Breast epithelium (tissue), 4 donors: ENCODE measurements at regions of chr7 and their contacts with region 1.

Region 1: DNA sequence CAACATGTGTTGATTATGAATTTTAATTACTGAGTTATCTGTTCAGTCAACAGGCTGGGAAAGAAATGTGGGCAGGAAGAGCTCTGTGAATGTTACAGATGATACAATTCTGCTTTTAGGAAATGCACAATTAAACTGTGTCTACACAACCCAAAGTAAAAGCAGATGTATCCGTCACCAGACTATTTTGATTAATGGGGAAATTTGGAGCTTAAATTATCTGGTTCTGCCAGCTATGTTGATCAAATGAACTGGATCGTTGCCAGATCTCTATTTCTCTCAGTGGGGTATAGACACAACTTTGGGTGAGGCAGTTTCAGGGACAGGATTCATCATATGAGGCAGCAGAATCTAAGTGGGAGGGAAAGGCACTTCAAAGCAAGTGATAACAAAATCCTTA is 136.5 kb downstream of the NEUROD6 start:
- DNase-seq: no peak
- H3K4me3 ChIP-seq: no peak overlapping the region
- H3K27ac ChIP-seq: no peak overlapping the region
- H3K4me1 ChIP-seq: no peaks in the 10 kb centered on the region
- H3K27me3 ChIP-seq: no peaks in the 10 kb centered on the region
- CTCF ChIP-seq: no peak
- POLR2A ChIP-seq: no peak

Region 2: DNA sequence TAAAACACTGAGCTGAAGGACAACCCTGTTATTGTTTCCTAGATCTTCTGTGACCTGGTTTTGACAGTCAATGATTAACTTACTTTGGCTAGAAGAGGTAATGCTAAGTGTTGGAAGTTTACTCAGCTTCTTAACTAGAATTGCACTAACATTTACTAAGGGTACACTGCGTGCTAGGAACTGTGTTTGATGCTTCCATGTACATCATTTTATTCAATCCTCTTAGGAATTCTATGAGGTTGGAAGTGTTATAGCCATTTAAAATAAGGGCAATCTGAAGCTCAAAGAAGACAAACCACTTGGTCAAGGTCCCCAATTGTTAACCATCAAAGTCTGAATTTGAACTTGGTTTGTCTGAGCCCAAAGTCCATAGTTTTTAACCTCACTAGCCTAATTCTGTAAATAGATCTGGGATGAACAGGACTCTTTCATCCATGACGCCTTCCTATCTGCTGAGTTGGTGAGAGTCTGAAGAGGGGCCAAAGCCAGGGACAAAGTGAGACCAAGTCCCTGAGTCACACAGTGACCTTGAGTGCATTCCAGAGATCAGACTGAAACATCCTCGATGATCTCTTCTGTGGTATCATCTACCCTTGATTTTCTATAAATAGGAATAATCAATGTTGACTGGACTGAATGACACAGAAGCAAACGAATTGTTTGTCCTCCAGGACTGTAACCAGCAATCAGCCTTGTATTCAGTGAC is 948.9 kb before region 1 on chr7:
- intact Hi-C with region 1: no loop called
- DNase-seq: no peak
- H3K4me3 ChIP-seq: no peak overlapping the region
- H3K27ac ChIP-seq: no peak overlapping the region
- H3K4me1 ChIP-seq: peaks cover 0 to 11% of the 10 kb centered on the region in 2 donors
- H3K27me3 ChIP-seq: no peaks in the 10 kb centered on the region
- CTCF ChIP-seq: no peak
- POLR2A ChIP-seq: no peak

Region 3: DNA sequence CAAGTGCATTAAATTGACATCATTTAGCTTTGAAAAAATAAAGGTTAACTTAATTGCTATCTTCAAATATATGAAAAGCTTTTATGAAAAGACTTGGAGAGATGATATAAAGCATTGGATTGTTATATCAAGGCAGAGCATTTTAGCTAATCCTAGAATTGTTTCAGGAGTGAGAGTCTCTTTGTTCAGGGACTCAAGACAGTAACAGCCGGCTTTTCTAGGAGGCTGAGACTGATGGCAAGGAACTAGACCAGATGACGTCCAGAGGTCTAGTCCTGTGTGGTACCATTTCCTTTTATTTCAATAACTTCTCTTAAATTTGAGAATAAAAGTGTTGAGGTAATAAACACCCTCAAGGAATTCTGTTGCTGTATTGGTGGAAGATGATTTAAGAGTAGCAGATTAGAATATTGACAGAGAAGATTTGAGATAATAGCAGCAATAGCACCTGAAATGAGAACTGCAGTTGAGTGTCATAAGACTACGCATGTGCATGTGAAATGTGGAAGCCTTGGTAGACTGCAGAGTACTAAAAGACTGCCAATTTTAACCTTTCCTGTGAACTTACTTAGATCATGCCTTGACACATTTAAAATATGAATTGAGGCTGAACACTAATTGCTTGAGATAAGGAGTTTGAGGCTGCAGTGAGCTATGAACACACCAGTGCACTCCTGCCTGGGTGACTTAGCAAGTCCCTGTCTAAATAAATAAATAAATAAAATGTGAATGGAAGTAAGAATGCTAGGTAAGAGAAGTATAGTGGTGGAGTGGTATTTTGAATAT is 840.1 kb before region 1 on chr7:
- intact Hi-C with region 1: no loop called
- DNase-seq: no peak
- H3K4me3 ChIP-seq: no peak overlapping the region
- H3K27ac ChIP-seq: no peak overlapping the region
- H3K4me1 ChIP-seq: no peaks in the 10 kb centered on the region
- H3K27me3 ChIP-seq: no peaks in the 10 kb centered on the region
- CTCF ChIP-seq: no peak
- POLR2A ChIP-seq: no peak

Region 4: GRCh38 chr7:31228957-31229356 is 24.9 kb after region 1 on chr7:
- intact Hi-C with region 1: loop called (anchors 2 kb)
- DNase-seq: no peak
- H3K4me3 ChIP-seq: no peak overlapping the region
- H3K27ac ChIP-seq: no peak overlapping the region
- H3K4me1 ChIP-seq: no peaks in the 10 kb centered on the region
- H3K27me3 ChIP-seq: no peaks in the 10 kb centered on the region
- CTCF ChIP-seq: no peak
- POLR2A ChIP-seq: no peak